Activated CD8-positive, alpha-beta memory T cell treated with anti-CD3 and anti-CD28 coated beads, Interleukin-2, amount 10 ng/mL, durations not matched to agents 7 days and 5 days (primary cell): ENCODE measurements at regions of chr14 and their contacts with region 1.

Region 1: GRCh38 chr14:70821584-70822529 is 12.5 kb upstream of the MAP3K9 start:
- DNase-seq: peak; percentile 62
- ATAC-seq: peak; percentile 65
- H3K4me3 Mint-ChIP-seq: peak overlapping the region; percentile 71
- H3K27ac Mint-ChIP-seq: peak overlapping the region; percentile 24
- H3K4me1 Mint-ChIP-seq: peaks cover 28% of the 10 kb centered on the region
- H3K27me3 Mint-ChIP-seq: peaks cover 25% of the 10 kb centered on the region

Region 2: GRCh38 chr14:70245026-70245425 is 576.8 kb before region 1 on chr14:
- CTCF ChIA-PET with region 1: no interaction called
- DNase-seq: no peak
- ATAC-seq: no peak
- H3K4me3 Mint-ChIP-seq: no peak overlapping the region
- H3K27ac Mint-ChIP-seq: no peak overlapping the region
- H3K4me1 Mint-ChIP-seq: no peaks in the 10 kb centered on the region
- H3K27me3 Mint-ChIP-seq: peaks cover 46% of the 10 kb centered on the region

Region 3: GRCh38 chr14:70873627-70874026 is 51.8 kb after region 1 on chr14:
- CTCF ChIA-PET with region 1: interaction called, 85 read pairs
- DNase-seq: peak; percentile 53
- ATAC-seq: no peak
- H3K4me3 Mint-ChIP-seq: no peak overlapping the region
- H3K27ac Mint-ChIP-seq: peak overlapping the region; percentile 58
- H3K4me1 Mint-ChIP-seq: peaks cover 26% of the 10 kb centered on the region
- H3K27me3 Mint-ChIP-seq: no peaks in the 10 kb centered on the region

Region 4: GRCh38 chr14:70919774-70920173 is 97.9 kb after region 1 on chr14:
- CTCF ChIA-PET with region 1: interaction called, 11 read pairs
- DNase-seq: no peak
- ATAC-seq: no peak
- H3K4me3 Mint-ChIP-seq: peak overlapping the region; percentile 30
- H3K27ac Mint-ChIP-seq: peak overlapping the region; percentile 83
- H3K4me1 Mint-ChIP-seq: peaks cover 78% of the 10 kb centered on the region
- H3K27me3 Mint-ChIP-seq: no peaks in the 10 kb centered on the region